ENCODE measurements at regions of chr15 and their contacts with region 1.

Region 1: GRCh38 chr15:84955089-84955848 is 26.4 kb upstream of the PDE8A start:
- DNase-seq: peak; percentile 68 to 78 (median 72)
- ATAC-seq: peak; percentile 84 to 97 (median 92)
- H3K4me3 ChIP-seq: no peak overlapping the region
- H3K27ac ChIP-seq: no peak overlapping the region
- H3K4me1 ChIP-seq: peaks cover 0 to 3% (median 0%) of the 10 kb centered on the region in 4 donors
- H3K27me3 ChIP-seq: no peaks in the 10 kb centered on the region
- CTCF ChIP-seq: peak; percentile 70 to 92 (median 86)
- POLR2A ChIP-seq: no peak

Region 2: DNA sequence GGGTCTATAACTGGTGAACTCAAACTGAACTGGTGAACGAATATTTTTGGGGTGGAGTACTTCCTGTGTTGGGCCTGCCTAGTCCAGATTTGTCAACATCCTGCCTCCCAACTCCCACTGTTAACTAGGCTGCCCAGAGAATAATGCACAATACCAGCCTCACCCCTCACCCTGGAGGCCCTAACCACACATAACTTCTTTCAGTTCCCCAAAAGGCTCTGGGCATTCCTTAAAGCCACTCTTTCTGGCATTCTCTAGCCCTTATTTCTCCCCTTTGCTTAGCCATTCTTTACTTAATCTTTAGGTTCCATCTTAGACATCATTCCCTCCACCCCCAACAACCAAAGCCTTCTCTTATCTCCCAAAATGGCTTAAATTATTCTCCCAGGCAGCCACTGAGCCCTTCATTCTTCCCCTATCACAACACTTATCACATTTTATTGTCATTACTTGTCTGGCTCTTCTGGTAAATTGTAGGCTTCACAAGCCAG is 230.2 kb before region 1 on chr15:
- intact Hi-C with region 1: no loop called
- DNase-seq: no peak
- ATAC-seq: peak; percentile 70 to 82 (median 80)
- H3K4me3 ChIP-seq: no peak overlapping the region
- H3K27ac ChIP-seq: peak overlapping the region in 1 of 3 donors; percentile 29
- H3K4me1 ChIP-seq: no peaks in the 10 kb centered on the region
- H3K27me3 ChIP-seq: no peaks in the 10 kb centered on the region
- CTCF ChIP-seq: no peak
- POLR2A ChIP-seq: no peak

Region 3: DNA sequence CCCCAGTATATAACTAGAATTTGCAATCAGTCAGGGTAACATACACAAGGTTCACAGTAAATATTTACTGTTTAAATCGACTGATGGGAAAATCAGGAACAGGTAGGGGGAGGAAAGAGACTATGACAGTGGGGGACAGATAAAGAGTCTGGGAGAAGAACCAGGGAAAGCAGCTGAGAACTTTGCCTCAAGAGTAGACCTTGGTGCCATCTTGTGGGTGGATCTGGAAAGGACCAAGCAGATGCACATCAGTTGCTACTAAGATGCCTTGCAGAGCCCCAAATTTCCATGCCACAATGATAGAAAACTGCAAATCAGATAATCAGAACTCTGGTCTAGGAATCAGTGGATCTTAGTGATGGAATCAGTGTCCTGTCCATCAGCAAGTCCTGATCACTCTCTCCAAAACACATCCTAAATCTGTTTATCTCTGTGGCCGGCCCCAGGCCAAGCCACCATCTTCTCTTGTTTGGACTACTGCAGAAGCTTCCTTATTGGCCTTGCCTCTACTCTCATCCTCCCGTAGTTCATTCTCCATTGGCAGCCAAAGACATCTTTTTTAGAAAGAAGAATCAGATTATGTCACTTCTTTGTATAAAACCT is 89.1 kb after region 1 on chr15:
- intact Hi-C with region 1: loop called (anchors 10 kb)
- DNase-seq: peak in 1 of 3 donors; percentile 62
- ATAC-seq: peak; percentile 85 to 93 (median 88)
- H3K4me3 ChIP-seq: no peak overlapping the region
- H3K27ac ChIP-seq: peak overlapping the region in 1 of 3 donors; percentile 16
- H3K4me1 ChIP-seq: peaks cover 0 to 21% (median 5%) of the 10 kb centered on the region in 4 donors
- H3K27me3 ChIP-seq: no peaks in the 10 kb centered on the region
- CTCF ChIP-seq: peak; percentile 63 to 71 (median 68)
- POLR2A ChIP-seq: no peak

Region 4: GRCh38 chr15:85172846-85173490 is 217.7 kb after region 1 on chr15:
- intact Hi-C with region 1: loop called in 1 of 2 experiments (anchors 10 kb)
- DNase-seq: no peak
- ATAC-seq: no peak
- H3K4me3 ChIP-seq: no peak overlapping the region
- H3K27ac ChIP-seq: no peak overlapping the region
- H3K4me1 ChIP-seq: peaks cover 0 to 7% (median 0%) of the 10 kb centered on the region in 4 donors
- H3K27me3 ChIP-seq: no peaks in the 10 kb centered on the region
- CTCF ChIP-seq: no peak
- POLR2A ChIP-seq: no peak

Measured in right lobe of liver (tissue), 6 donors.